PC-9 (cell line): ENCODE measurements at regions of chr7 and their contacts with region 1.

Region 1: DNA sequence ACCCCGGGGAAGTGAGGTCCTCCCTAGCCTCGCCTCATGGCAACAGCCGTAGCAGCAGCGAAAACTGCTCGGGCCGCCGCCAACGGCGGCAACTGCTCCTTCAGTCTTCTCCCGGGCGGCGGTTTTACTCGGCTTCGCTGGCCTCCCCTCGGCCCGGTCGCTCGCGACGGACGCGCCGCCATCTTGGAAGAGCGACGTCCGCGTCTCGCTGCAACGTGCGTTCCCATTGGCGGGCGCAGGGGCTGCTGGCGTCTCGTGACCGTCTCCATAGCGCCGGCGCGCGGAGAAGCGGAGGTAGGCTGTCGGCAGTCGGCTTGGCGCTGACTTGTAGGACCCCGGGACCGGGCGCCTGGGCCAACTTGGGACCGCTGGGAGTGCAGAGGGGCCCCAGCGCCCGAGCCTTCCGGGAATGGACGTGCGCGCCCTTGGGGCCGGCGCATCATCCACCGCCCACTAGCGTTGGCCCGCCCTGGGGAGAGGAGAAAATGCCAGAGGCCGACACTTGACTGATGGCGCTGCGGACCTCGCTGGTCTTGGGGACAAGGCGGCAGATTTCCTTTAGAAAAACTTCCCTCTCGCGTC is at the start of gene SNX13:
- DNase-seq: peak; percentile 87 to 91
- H3K4me3 ChIP-seq: peak within 1 kb of the TSS; percentile 81
- H3K27ac ChIP-seq: peak within 1 kb of the TSS; percentile 81
- H3K4me1 ChIP-seq: peaks cover 41% of the 10 kb centered on the region
- H3K27me3 ChIP-seq: no peaks in the 10 kb centered on the region
- CTCF ChIP-seq: peak; percentile 46
- total RNA-seq, gene SNX13: 48.8 and 56.3 TPM in 2 replicates

Region 2: DNA sequence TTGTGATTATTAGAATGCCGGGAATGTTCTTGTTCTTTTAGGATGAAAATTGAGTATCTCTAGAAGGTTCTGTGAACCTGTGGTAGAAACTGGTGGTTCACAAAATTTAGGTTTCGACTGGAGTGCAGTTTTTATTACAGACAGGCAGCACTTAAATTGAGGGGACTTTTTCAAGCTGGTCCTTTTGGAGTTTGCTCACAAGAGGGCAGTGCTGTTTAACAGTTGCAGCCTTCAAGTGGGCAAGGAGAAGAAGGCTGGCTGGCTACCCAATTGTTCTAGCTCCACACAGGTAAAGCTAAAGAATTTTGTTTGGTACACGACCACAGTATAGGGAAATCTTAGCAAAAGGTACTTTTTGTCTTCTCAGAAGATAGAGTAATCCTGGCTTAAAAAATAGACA is 233.7 kb before region 1 on chr7:
- CTCF ChIA-PET with region 1: no interaction called
- POLR2A ChIA-PET with region 1: no interaction called
- intact Hi-C with region 1: loop called (anchors 10 kb)
- DNase-seq: peak; percentile 52 to 61
- H3K4me3 ChIP-seq: no peak overlapping the region
- H3K27ac ChIP-seq: no peak overlapping the region
- H3K4me1 ChIP-seq: no peaks in the 10 kb centered on the region
- H3K27me3 ChIP-seq: no peaks in the 10 kb centered on the region
- CTCF ChIP-seq: peak; percentile 92

Region 3: GRCh38 chr7:18495412-18496340 is 555.3 kb after region 1 on chr7 and contains the start of gene HDAC9:
- CTCF ChIA-PET with region 1: no interaction called
- POLR2A ChIA-PET with region 1: interaction called, 15 read pairs
- intact Hi-C with region 1: no loop called
- DNase-seq: peak in 1 of 2 experiments; percentile 37
- H3K4me3 ChIP-seq: peak within 1 kb of the TSS; percentile 5; the same call in 1 of the 2 replicates
- H3K27ac ChIP-seq: no peak within 1 kb of the TSS
- H3K4me1 ChIP-seq: no peaks in the 10 kb centered on the region
- H3K27me3 ChIP-seq: no peaks in the 10 kb centered on the region
- CTCF ChIP-seq: no peak
- total RNA-seq, gene HDAC9: 14.7 TPM in 2 replicates